ENCODE measurements at regions of chr7 and their contacts with region 1.

Region 1: DNA sequence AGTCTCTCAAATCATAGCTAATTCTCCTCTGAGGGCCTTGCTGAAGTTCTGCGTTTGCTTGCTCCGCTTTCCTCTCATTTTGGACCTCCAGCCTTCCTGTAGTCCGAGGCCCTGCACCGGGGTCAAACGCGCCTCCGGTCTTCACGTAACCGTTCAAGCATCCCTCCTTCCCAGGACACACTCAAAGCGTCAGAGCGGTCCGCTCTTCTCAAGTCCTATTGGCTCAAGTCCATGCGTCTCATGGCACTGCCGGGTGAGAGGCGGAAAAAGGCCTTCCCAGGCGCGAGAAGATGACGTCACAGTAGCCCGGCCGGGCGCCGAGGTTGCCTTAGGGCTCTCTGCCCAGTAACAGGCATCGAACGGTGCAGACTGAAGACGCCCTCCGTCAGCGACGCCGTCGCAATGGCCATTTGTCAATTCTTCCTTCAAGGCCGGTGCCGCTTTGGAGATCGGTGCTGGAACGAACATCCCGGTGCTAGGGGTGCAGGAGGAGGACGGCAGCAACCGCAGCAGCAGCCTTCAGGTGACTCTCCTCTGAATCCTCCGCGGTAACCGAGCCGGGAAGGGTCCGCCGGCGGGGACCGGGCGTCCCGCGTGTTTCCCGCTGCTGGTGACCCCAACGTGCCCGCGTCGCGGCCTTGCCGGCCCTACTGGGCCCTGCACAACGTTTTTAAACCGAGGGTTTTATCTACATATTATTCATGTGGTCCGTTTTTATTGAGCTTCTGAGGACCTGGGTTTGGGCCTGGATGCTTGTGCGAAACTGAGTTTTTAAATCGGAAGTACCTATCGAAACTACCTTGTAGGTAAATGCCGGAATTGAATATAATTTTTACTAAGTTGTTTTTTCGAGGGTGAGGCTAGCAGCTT is at the start of gene NUP42:
- DNase-seq: peak; percentile 89 to 97 (median 94)

Region 2: DNA sequence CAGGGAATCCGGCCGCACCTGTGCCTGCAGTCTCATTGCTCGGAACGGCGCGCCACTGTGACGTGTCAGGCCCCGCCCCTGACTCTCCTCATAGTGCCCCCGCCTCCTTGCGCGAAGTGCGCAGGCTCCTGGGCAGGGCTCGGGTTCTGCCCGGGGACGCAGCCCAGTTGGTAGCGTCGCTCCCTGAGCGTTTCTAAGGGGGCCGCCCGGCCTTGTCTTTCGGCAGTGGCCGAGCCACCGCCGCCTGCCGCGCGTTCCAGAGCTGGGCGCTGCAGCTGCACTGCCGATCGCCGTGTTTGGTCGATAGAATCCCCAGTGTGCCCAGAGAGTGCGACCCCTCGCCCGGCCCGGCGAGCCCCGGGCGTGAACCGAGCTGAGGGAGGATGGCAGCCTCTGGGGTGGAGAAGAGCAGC is 76.3 kb before region 1 on chr7 and contains the start of gene KLHL7:
- intact Hi-C with region 1: loop called (anchors 2 kb)
- DNase-seq: peak; percentile 96 to 99 (median 98)

Region 3: DNA sequence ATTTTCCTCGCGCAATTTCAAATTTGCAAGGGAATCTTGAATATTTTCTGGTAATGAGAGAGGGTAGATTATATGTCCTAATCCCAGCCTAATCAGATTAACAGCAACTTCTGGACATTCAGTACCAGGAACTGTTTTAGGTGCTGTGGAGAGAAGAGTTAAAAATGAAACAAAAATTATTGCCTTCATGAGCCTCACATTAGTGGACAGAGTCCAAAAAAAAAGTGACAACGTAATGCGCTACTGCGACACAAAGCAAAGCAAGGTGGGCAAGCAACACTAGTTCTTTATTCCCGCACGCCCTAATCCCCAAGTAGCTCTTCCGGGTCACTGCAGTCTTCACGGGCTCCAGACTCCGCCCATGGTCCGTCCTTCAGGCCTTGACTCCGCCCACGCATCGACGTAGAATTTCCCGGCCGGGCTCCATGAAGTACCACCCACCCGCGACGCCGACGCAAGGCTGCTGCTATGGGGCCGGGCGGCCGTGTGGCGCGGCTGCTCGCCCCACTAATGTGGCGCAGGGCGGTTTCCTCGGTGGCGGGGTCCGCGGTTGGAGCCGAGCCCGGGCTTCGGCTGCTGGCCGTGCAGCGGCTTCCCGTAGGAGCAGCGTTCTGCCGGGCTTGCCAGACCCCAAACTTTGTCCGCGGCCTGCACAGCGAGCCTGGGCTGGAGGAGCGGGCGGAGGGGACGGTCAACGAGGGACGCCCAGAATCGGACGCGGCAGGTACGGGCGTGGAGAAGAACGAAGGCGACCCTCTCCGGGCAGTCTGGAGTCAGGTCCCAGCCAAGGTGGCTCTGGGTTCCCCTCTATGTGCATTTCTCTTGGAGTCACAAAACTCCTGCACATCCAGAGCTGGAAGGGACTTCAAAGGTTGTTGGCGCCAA is 117.2 kb after region 1 on chr7 and contains the start of gene MALSU1:
- intact Hi-C with region 1: loop called (anchors 5 kb)
- DNase-seq: peak; percentile 95 to 99 (median 98)

Region 4: DNA sequence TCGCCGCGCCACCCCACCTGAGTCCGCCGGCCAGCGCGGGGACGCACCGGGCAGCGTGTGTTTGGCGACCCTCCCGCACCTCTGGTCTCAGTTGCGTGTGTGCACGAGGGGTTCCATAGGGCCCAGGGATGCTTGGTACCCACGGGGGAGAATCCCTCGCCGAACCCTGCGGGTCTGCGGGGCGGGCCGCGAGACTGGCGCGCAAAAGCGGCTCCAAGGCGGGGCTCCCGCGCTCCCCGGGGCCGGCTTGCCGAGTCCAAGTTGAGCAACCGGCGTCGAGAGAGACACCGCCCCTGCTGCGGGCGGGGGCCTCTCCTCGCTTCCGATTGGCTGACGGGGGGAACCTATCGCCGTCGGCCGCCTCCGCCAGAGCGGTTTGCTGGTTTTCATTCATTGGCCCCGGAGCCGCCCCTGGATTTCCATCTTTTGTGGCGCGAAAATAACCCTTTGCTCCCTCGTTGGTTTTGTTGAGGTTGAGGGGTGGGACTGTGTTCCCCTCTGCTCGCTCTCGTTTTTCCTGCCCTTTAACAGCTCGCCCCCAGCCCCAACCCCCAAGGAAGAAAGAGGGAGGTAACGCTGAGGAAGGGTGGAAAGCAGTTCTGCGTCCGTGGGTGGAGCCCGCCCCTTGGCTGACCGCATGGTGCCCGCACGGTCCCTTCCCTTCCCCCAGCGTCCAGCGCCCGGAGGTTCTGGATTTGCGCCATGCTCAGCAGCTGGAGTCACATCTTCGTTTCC is 292.3 kb after region 1 on chr7:
- intact Hi-C with region 1: loop called (anchors 10 kb)
- DNase-seq: peak in 4 of 42 donors; percentile 9 to 49 (median 28)

Region 5: GRCh38 chr7:23531794-23532489 is 350.0 kb after region 1 on chr7 and contains the start of gene TRA2A:
- intact Hi-C with region 1: loop called (anchors 5 kb)
- DNase-seq: peak; percentile 97 to 99 (median 99)

Measured in head of caudate nucleus (tissue), 42 donors.